Heart left ventricle (tissue), 16 donors: ENCODE measurements at regions of chrX and their contacts with region 1.

Region 1: DNA sequence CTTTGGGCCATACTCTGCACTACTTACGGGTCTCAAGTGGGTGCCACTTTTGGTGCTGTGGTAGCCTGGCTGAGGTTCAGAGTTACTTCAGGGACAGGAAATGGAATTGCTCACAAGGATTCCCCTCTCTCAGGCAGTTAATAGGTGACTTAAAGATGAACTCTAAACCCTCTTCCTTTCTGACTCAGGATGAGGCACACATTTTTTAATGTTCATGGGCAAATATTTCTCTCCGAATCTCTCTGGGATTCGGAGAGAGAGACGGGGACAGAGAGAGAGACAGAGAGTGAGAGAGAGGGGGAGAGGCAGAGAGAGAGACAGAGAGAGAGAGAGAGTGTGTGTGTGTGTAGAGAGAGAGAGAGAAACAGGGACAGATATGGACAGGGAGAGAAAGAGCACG is 79.8 kb downstream of the NYX start:
- DNase-seq: no peak
- ATAC-seq: peak in 1 of 4 donors; percentile 52
- H3K4me3 ChIP-seq: no peak overlapping the region
- H3K27ac ChIP-seq: no peak overlapping the region
- H3K4me1 ChIP-seq: peaks cover 0 to 5% (median 0%) of the 10 kb centered on the region in 12 donors
- H3K27me3 ChIP-seq: peaks cover 0 to 10% (median 0%) of the 10 kb centered on the region in 9 donors
- CTCF ChIP-seq: no peak
- POLR2A ChIP-seq: no peak

Region 2: GRCh38 chrX:41441934-41442823 is 84.7 kb before region 1 on chrX:
- intact Hi-C with region 1: loop called in 1 of 10 experiments (anchors 10 kb)
- DNase-seq: peak; percentile 74 to 91 (median 86)
- ATAC-seq: peak; percentile 92 to 95 (median 94)
- H3K4me3 ChIP-seq: peak overlapping the region in 10 of 12 donors; percentile 33 to 54 (median 44)
- H3K27ac ChIP-seq: peak overlapping the region; percentile 41 to 89 (median 67)
- H3K4me1 ChIP-seq: peaks cover 0 to 12% (median 2%) of the 10 kb centered on the region in 12 donors
- H3K27me3 ChIP-seq: peaks cover 0 to 12% (median 0%) of the 10 kb centered on the region in 9 donors
- CTCF ChIP-seq: peak; percentile 49 to 79 (median 59)
- POLR2A ChIP-seq: peak in 1 of 2 donors; percentile 44